ENCODE measurements at regions of chr1 and their contacts with region 1.

Region 1: GRCh38 chr1:37682334-37682987 is 9.9 kb upstream of the CDCA8 start:
- DNase-seq: peak; percentile 38
- ATAC-seq: peak; percentile 80
- H3K4me3 ChIP-seq: no peak overlapping the region
- H3K27ac ChIP-seq: no peak overlapping the region
- H3K4me1 ChIP-seq: no peaks in the 10 kb centered on the region
- H3K27me3 ChIP-seq: no peaks in the 10 kb centered on the region
- CTCF ChIP-seq: peak; percentile 79 to 85 (median 81)
- POLR2A ChIP-seq: no peak
- RAD21 ChIP-seq: peak; percentile 85

Region 2: DNA sequence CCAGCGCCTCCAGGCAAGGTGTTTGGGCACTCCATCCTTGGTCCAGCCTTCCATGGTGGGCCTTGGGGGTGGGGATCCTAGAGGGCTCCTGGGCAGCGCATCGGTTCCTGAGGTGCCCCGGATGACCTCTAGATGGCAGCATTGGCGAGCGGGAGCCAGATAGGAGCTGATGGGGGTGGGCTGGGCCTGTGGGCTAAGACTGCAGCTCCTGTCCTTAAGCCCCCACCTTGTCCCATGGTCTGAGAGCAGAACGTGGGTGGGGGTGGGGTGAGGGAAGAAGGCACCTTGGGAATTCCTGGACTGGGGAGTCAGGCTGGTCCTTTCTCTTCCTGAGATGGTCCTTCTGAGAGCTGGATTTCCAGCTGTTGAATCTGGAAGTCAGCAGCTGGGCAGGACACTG is 1106.3 kb before region 1 on chr1:
- CTCF ChIA-PET with region 1: no interaction called
- POLR2A ChIA-PET with region 1: no interaction called
- RAD21 ChIA-PET with region 1: no interaction called
- intact Hi-C with region 1: loop called (anchors 10 kb)
- DNase-seq: peak; percentile 43
- ATAC-seq: peak; percentile 99
- H3K4me3 ChIP-seq: no peak overlapping the region
- H3K27ac ChIP-seq: no peak overlapping the region
- H3K4me1 ChIP-seq: no peaks in the 10 kb centered on the region
- H3K27me3 ChIP-seq: peaks cover 14% of the 10 kb centered on the region; the same call in 1 of the 2 replicates
- CTCF ChIP-seq: peak; percentile 59 to 92 (median 92); a peak in 5 of 6 replicates
- POLR2A ChIP-seq: no peak
- RAD21 ChIP-seq: peak; percentile 88

Region 3: GRCh38 chr1:37458528-37458927 is 223.9 kb before region 1 on chr1:
- CTCF ChIA-PET with region 1: interaction called, 4 read pairs
- POLR2A ChIA-PET with region 1: no interaction called
- RAD21 ChIA-PET with region 1: no interaction called
- intact Hi-C with region 1: loop called (anchors 1 kb)
- DNase-seq: no peak
- ATAC-seq: peak; percentile 48
- H3K4me3 ChIP-seq: no peak overlapping the region
- H3K27ac ChIP-seq: no peak overlapping the region
- H3K4me1 ChIP-seq: peaks cover 3 to 17% of the 10 kb centered on the region in 2 experiments; a peak in 3 of 4 replicates
- H3K27me3 ChIP-seq: no peaks in the 10 kb centered on the region
- CTCF ChIP-seq: peak in 2 of 3 experiments; percentile 39 to 60; a peak in 3 of 6 replicates
- POLR2A ChIP-seq: no peak
- RAD21 ChIP-seq: peak; percentile 64

Region 4: GRCh38 chr1:37549341-37549740 is 133.1 kb before region 1 on chr1:
- CTCF ChIA-PET with region 1: no interaction called
- POLR2A ChIA-PET with region 1: no interaction called
- RAD21 ChIA-PET with region 1: no interaction called
- intact Hi-C with region 1: no loop called
- DNase-seq: no peak
- ATAC-seq: no peak
- H3K4me3 ChIP-seq: no peak overlapping the region
- H3K27ac ChIP-seq: no peak overlapping the region
- H3K4me1 ChIP-seq: peaks cover 8 to 17% of the 10 kb centered on the region in 2 experiments
- H3K27me3 ChIP-seq: no peaks in the 10 kb centered on the region
- CTCF ChIP-seq: no peak
- POLR2A ChIP-seq: no peak
- RAD21 ChIP-seq: no peak

Region 5: GRCh38 chr1:37561133-37562132 is 121.0 kb before region 1 on chr1:
- CTCF ChIA-PET with region 1: interaction called, 3 read pairs
- POLR2A ChIA-PET with region 1: no interaction called
- RAD21 ChIA-PET with region 1: no interaction called
- intact Hi-C with region 1: loop called (anchors 1 kb)
- DNase-seq: peak; percentile 35
- ATAC-seq: peak; percentile 88
- H3K4me3 ChIP-seq: no peak overlapping the region
- H3K27ac ChIP-seq: no peak overlapping the region
- H3K4me1 ChIP-seq: peaks cover 5% of the 10 kb centered on the region in 2 experiments
- H3K27me3 ChIP-seq: no peaks in the 10 kb centered on the region
- CTCF ChIP-seq: peak; percentile 62 to 90 (median 89)
- POLR2A ChIP-seq: no peak
- RAD21 ChIP-seq: peak; percentile 84

Region 6: DNA sequence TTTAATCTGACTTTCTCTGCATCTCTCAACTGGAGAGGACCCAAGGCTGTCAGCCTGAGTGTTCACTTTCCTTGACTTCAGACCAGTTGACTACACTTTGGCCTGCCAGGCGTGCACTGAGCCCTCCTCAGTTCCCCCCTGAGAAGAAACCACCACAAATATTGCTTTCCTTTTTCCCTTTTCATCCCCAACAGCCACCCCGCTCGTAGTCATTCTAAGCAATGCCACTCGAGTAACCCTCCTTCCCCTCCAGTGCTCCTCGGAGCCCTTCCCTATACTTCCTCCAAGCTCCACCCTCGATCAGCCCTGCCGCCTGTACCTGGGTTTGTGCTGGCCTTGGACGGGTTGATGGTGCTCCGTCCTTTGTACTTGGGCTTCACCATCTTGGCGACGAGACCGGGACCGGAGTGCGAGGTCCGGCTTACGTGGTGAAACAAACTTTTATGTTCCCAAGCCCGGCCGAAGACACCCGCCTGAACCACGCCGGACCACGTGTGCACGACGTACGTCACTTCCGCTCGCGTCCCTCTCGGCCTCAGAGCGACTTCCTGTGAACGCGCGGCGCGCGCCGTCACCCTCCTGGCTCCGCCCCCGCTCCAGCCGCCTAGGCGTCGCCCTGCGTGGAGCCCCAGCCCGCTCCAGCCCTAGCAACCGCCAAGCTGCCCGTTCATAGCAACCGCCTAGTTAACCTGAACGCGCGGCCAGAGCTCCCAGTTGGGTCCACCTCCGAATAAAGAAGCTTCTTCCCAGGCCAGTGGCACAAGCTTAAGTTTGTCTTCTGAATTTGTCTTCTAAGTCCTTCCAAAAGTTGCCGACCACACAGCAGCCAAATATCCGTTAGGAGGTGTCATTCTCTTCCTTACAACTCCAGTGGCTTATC is 86.8 kb before region 1 on chr1 and contains the start of gene GNL2:
- CTCF ChIA-PET with region 1: no interaction called
- POLR2A ChIA-PET with region 1: no interaction called
- RAD21 ChIA-PET with region 1: no interaction called
- intact Hi-C with region 1: loop called (anchors 2 kb)
- DNase-seq: peak; percentile 92
- ATAC-seq: peak; percentile 99
- H3K4me3 ChIP-seq: peak within 1 kb of the TSS; percentile 98 to 100
- H3K27ac ChIP-seq: peak within 1 kb of the TSS; percentile 52
- H3K4me1 ChIP-seq: peaks cover 10 to 16% of the 10 kb centered on the region in 2 experiments; a peak in 2 of 4 replicates
- H3K27me3 ChIP-seq: no peaks in the 10 kb centered on the region
- CTCF ChIP-seq: no peak
- POLR2A ChIP-seq: peak; percentile 57
- RAD21 ChIP-seq: no peak
- total RNA-seq, gene GNL2: 79.2 TPM

Region 7: GRCh38 chr1:37602750-37603694 is 79.4 kb before region 1 on chr1:
- CTCF ChIA-PET with region 1: interaction called, 10 read pairs
- POLR2A ChIA-PET with region 1: interaction called, 3 read pairs
- RAD21 ChIA-PET with region 1: no interaction called
- intact Hi-C with region 1: loop called (anchors 1 kb)
- DNase-seq: no peak
- ATAC-seq: peak; percentile 93
- H3K4me3 ChIP-seq: no peak overlapping the region
- H3K27ac ChIP-seq: no peak overlapping the region
- H3K4me1 ChIP-seq: no peaks in the 10 kb centered on the region
- H3K27me3 ChIP-seq: peaks cover 21% of the 10 kb centered on the region
- CTCF ChIP-seq: peak; percentile 72 to 85 (median 81); a peak in 5 of 6 replicates
- POLR2A ChIP-seq: no peak
- RAD21 ChIP-seq: peak; percentile 55

Region 8: GRCh38 chr1:37782491-37782890 is 100.0 kb after region 1 on chr1:
- CTCF ChIA-PET with region 1: no interaction called
- POLR2A ChIA-PET with region 1: no interaction called
- RAD21 ChIA-PET with region 1: no interaction called
- intact Hi-C with region 1: no loop called
- DNase-seq: no peak
- ATAC-seq: no peak
- H3K4me3 ChIP-seq: no peak overlapping the region
- H3K27ac ChIP-seq: no peak overlapping the region
- H3K4me1 ChIP-seq: no peaks in the 10 kb centered on the region
- H3K27me3 ChIP-seq: peaks cover 4% of the 10 kb centered on the region; the same call in 1 of the 2 replicates
- CTCF ChIP-seq: no peak
- POLR2A ChIP-seq: no peak
- RAD21 ChIP-seq: no peak

Region 9: GRCh38 chr1:38076038-38076437 is 393.6 kb after region 1 on chr1:
- CTCF ChIA-PET with region 1: no interaction called
- POLR2A ChIA-PET with region 1: no interaction called
- RAD21 ChIA-PET with region 1: no interaction called
- intact Hi-C with region 1: no loop called
- DNase-seq: no peak
- ATAC-seq: no peak
- H3K4me3 ChIP-seq: no peak overlapping the region
- H3K27ac ChIP-seq: no peak overlapping the region
- H3K4me1 ChIP-seq: no peaks in the 10 kb centered on the region
- H3K27me3 ChIP-seq: no peaks in the 10 kb centered on the region
- CTCF ChIP-seq: no peak
- POLR2A ChIP-seq: no peak
- RAD21 ChIP-seq: no peak

Measured in HCT116 (cell line).